ENCODE measurements at regions of chr3 and their contacts with region 1.

Region 1: GRCh38 chr3:20173844-20174410 is 12.1 kb downstream of the SGO1 start:
- DNase-seq: no peak
- H3K4me3 ChIP-seq: no peak overlapping the region
- H3K27me3 ChIP-seq: no peaks in the 10 kb centered on the region
- CTCF ChIP-seq: no peak

Region 2: DNA sequence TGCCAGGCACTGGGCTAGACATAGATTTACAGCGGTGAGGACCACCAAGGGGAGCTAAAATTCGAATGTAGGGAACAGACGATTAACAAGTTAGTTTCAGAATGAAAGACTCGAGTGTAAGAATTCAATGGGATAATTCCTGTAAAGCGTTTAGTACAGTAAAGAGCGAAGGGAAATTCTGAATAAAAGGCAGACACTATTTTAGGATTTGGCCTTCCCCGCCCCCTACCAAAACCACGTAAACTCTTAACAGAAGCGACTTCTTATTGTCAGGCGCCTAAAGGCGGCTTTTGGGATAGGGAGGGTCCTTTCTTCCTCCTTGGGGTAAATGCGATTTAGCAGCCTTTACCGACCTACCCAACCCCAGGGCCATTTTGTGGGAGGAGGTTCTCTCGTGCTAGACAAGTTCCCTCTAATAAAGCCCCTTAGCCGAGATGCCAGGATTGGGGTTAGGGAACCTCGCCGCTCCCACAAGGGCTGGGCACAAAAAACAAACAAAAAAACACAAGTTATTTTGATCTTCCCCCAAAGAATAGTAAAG is 227.6 kb before region 1 on chr3:
- CTCF ChIA-PET with region 1: no interaction called
- POLR2A ChIA-PET with region 1: interaction called, 16 read pairs
- DNase-seq: no peak
- H3K4me3 ChIP-seq: peak overlapping the region; percentile 74
- H3K27me3 ChIP-seq: no peaks in the 10 kb centered on the region
- CTCF ChIP-seq: no peak

Measured in BJ (cell line).